ENCODE measurements at regions of chr3 and their contacts with region 1.

Region 1: DNA sequence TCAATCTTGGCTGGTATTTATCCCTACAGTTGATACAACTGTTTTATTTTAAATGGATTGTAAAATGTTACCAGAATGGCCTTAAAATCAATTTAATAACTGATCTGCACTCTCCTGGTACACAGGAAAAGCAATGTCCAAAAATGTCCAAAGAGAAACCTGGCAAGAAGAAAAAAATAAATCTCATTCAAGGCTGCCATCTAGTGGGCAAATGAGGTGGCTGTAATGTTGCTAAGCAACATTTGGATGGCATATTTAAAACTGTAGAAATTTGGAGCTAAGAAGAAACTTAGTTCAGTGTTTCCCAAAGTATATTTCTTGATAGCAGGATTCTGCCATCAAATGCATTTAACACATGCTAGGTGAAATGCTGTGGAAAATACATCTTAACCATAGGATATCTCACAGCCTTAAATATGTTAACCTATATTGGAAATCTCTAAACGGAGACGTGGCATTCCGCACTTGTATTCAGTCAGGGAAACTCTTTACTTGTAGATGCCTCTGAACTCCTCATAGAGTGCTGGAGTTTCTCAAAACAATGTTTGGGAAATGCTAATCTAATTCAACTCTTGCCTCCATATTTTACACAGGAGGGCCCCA is 216.8 kb downstream of the ERC2 start:
- DNase-seq: peak; percentile 48
- CTCF ChIP-seq: peak; percentile 64

Region 2: GRCh38 chr3:54853573-54854404 is 1397.7 kb before region 1 on chr3:
- in situ Hi-C with region 1: loop called (anchors 25 kb)
- DNase-seq: peak; percentile 76
- CTCF ChIP-seq: peak; percentile 85

Region 3: GRCh38 chr3:55485211-55485791 is 766.1 kb before region 1 on chr3:
- in situ Hi-C with region 1: loop called (anchors 25 kb)
- DNase-seq: peak; percentile 89
- CTCF ChIP-seq: peak; percentile 69

Region 4: GRCh38 chr3:56096999-56097398 is 154.4 kb before region 1 on chr3:
- in situ Hi-C with region 1: no loop called
- DNase-seq: no peak
- CTCF ChIP-seq: no peak

Region 5: GRCh38 chr3:56197991-56198390 is 53.5 kb before region 1 on chr3:
- in situ Hi-C with region 1: no loop called
- DNase-seq: no peak
- CTCF ChIP-seq: no peak

Measured in GM13976 (cell line).